GM10248 (cell line): ENCODE measurements at regions of chr11 and their contacts with region 1.

Region 1: DNA sequence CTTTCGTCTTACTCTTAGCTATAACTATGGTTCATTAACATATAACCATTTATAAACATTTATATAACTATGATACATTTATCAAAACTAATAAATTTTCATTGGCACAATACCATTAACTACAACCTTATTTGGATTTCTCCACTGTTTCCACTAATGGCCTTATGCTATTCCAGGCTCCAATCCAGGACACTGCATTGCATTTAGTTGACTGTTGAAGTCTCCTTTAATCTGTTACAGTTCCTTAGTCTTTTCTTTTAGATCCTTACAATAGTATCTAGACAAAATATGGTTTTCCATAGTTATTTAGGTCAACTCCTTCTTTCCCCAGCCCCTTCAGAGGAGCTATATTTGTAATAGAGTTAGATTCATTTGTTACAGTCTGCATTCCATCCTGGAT is 47.2 kb downstream of the CCDC34 start:
- DNase-seq: no peak
- CTCF ChIP-seq: no peak

Region 2: GRCh38 chr11:27304514-27304913 is 11.3 kb before region 1 on chr11:
- CTCF ChIA-PET with region 1: interaction called, 21 read pairs
- POLR2A ChIA-PET with region 1: no interaction called
- DNase-seq: no peak
- CTCF ChIP-seq: no peak

Region 3: DNA sequence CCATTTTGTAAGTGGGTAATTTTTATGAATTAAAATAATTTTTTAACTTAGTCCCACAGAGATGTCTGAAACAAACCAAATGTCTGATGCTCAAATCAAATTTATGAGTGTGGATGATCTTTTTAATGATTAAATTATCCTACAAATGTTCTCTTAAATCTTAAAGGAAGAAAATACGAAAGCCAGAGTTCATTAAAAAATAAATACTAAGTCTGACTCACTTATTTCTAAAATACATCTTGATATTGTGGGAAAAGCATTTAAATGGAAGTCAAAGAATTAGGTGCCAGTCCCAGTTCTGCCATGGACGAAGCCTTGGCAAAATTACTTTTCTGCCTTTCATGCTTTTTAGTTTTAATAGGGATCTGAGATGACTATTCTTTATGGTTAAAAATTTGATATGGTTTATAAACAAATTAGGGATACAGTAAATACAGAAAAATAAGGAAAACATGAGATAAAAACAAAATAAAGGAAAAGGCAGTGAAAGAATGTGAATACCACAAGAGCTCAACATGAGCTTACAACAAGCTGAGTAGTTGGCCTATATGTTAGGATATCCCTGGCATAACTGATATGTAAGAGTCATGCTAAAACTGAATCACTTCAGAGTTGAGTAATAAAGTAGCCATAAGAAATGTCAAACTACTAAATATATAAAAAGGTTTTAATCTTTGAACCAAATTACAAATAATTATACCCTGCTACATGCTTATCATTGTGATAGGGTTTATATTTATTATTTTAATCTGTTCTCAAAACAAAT is 37.9 kb after region 1 on chr11:
- CTCF ChIA-PET with region 1: no interaction called
- POLR2A ChIA-PET with region 1: no interaction called
- DNase-seq: no peak
- CTCF ChIP-seq: no peak

Region 4: GRCh38 chr11:27599217-27599616 is 283.4 kb after region 1 on chr11:
- CTCF ChIA-PET with region 1: no interaction called
- POLR2A ChIA-PET with region 1: no interaction called
- DNase-seq: no peak
- CTCF ChIP-seq: no peak